Dorsolateral prefrontal cortex (tissue), 120 donors: ENCODE measurements at regions of chr21 and their contacts with region 1.

Region 1: GRCh38 chr21:41460578-41461527 is 34.8 kb downstream of the MX1 start:
- DNase-seq: peak in 9 of 10 donors; percentile 14 to 73 (median 65)
- H3K4me3 ChIP-seq: no peak overlapping the region
- H3K27ac ChIP-seq: no peak overlapping the region
- H3K27me3 ChIP-seq: peaks cover 0 to 4% (median 0%) of the 10 kb centered on the region in 45 donors
- CTCF ChIP-seq: peak; percentile 22 to 82 (median 68)

Region 2: GRCh38 chr21:41121785-41122421 is 338.9 kb before region 1 on chr21:
- intact Hi-C with region 1: loop called in 1 of 2 experiments (anchors 5 kb)
- DNase-seq: peak; percentile 34 to 93 (median 80)
- H3K4me3 ChIP-seq: no peak overlapping the region
- H3K27ac ChIP-seq: no peak overlapping the region
- H3K27me3 ChIP-seq: peaks cover 0 to 6% (median 0%) of the 10 kb centered on the region in 45 donors
- CTCF ChIP-seq: peak; percentile 46 to 88 (median 76)

Region 3: GRCh38 chr21:41283211-41283818 is 177.5 kb before region 1 on chr21:
- intact Hi-C with region 1: loop called (anchors 2 to 10 kb)
- DNase-seq: peak in 2 of 10 donors; percentile 20 to 46
- H3K4me3 ChIP-seq: no peak overlapping the region
- H3K27ac ChIP-seq: no peak overlapping the region
- H3K27me3 ChIP-seq: peaks cover 0 to 32% (median 0%) of the 10 kb centered on the region in 45 donors
- CTCF ChIP-seq: peak; percentile 43 to 88 (median 72)

Region 4: DNA sequence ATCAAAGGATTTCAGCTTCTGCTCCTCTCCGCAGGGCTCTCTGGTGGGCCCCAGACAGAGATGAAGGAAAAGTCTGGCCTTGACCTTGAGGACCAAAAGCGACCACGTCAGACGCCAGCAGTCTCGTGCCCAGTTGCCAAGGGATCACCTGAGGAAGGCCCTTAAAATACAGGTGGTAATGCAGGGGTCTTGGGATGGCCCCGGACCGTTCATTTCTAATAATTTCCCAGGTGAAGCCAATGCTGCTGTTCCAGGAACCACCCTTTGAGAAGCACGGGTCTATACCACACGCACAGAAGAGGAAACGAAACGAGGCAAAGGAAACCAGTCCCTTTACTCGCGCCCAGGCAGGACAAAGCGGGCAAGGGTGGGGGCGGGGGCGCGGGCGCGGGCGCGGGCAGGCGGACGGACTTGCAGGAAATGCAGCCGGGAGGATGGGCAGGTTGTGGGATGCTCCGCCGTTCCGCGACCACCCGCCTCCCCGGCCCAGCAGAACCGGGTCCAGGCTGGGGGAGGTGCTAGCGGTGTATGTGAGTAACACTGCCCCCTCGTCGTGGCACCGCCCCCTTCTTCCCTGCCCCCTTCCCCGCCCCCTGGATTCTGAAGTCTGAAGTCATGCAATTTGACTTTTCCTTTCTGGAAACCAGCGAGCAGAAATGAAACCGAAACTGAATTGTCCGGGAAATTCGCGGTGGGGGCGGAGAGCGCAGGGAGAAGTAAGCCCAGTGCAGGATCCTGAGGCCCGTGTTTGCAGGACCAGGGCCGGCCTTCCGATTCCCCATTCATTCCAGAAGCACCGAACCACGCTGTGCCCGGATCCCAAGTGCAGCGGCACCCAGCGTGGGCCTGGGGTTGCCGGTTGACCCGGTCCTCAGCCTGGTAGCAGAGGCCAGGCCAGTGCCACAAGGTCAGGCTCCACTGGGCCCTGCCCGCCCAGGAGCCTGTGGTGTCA is 40.7 kb before region 1 on chr21:
- intact Hi-C with region 1: no loop called
- DNase-seq: peak in 9 of 10 donors; percentile 24 to 76 (median 58)
- H3K4me3 ChIP-seq: peak overlapping the region; percentile 32 to 84 (median 71)
- H3K27ac ChIP-seq: peak overlapping the region in 58 of 59 donors; percentile 39 to 96 (median 84)
- H3K27me3 ChIP-seq: no peaks in the 10 kb centered on the region
- CTCF ChIP-seq: peak in 13 of 56 donors; percentile 6 to 32 (median 18)

Region 5: DNA sequence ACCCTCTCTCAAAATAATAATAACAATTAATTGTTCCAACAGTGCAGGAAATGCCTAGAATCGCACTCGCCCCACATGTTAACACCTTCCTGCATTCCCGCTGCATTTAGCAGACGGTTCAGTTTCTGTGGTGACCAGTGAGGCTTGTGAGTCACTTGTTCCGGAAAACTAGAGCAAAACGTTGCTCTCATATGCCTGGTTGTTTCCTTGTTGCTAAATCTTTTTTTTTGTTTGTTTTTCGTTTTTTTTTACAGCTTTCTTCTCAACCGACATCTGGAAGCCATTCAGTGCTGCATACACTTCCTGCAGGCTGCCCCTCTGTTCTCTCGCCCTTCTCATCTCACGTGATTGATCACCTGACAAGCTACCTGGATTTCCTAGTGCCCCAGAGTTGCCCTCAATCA is 104.0 kb after region 1 on chr21:
- intact Hi-C with region 1: no loop called
- DNase-seq: no peak
- H3K4me3 ChIP-seq: no peak overlapping the region
- H3K27ac ChIP-seq: no peak overlapping the region
- H3K27me3 ChIP-seq: peaks cover 0 to 14% (median 0%) of the 10 kb centered on the region in 45 donors
- CTCF ChIP-seq: no peak

Region 6: GRCh38 chr21:41663801-41664788 is 203.2 kb after region 1 on chr21:
- intact Hi-C with region 1: no loop called
- DNase-seq: no peak
- H3K4me3 ChIP-seq: no peak overlapping the region
- H3K27ac ChIP-seq: no peak overlapping the region
- H3K27me3 ChIP-seq: peaks cover 0 to 11% (median 0%) of the 10 kb centered on the region in 45 donors
- CTCF ChIP-seq: no peak